Activated B cell treated with CpG ODN at 0.5 μM for 24 hours (primary cell): ENCODE measurements at regions of chr15 and their contacts with region 1.

Region 1: GRCh38 chr15:84588053-84588874 is 12.5 kb upstream of the ZSCAN2 start:
- DNase-seq: peak; percentile 79
- ATAC-seq: peak; percentile 100
- H3K4me3 Mint-ChIP-seq: peak overlapping the region; percentile 72
- H3K27ac Mint-ChIP-seq: no peak overlapping the region
- H3K4me1 Mint-ChIP-seq: peaks cover 4% of the 10 kb centered on the region
- H3K27me3 Mint-ChIP-seq: peaks cover 3% of the 10 kb centered on the region
- CTCF ChIP-seq: peak; percentile 39

Region 2: GRCh38 chr15:84600851-84601838 is 12.9 kb after region 1 on chr15 and contains the start of gene ZSCAN2:
- CTCF ChIA-PET with region 1: interaction called, 9 read pairs
- POLR2A ChIA-PET with region 1: interaction called, 12 read pairs
- intact Hi-C with region 1: no loop called
- DNase-seq: peak; percentile 86
- ATAC-seq: peak; percentile 94
- H3K4me3 Mint-ChIP-seq: peak within 1 kb of the TSS; percentile 97
- H3K27ac Mint-ChIP-seq: peak within 1 kb of the TSS; percentile 88
- H3K4me1 Mint-ChIP-seq: peaks cover 73% of the 10 kb centered on the region
- H3K27me3 Mint-ChIP-seq: no peaks in the 10 kb centered on the region
- CTCF ChIP-seq: no peak
- total RNA-seq, gene ZSCAN2: 16.0 and 18.7 TPM in 2 replicates

Region 3: GRCh38 chr15:84702961-84703482 is 114.8 kb after region 1 on chr15:
- CTCF ChIA-PET with region 1: no interaction called
- POLR2A ChIA-PET with region 1: no interaction called
- intact Hi-C with region 1: no loop called
- DNase-seq: no peak
- ATAC-seq: no peak
- H3K4me3 Mint-ChIP-seq: no peak overlapping the region
- H3K27ac Mint-ChIP-seq: no peak overlapping the region
- H3K4me1 Mint-ChIP-seq: peaks cover 62% of the 10 kb centered on the region
- H3K27me3 Mint-ChIP-seq: no peaks in the 10 kb centered on the region
- CTCF ChIP-seq: no peak

Region 4: DNA sequence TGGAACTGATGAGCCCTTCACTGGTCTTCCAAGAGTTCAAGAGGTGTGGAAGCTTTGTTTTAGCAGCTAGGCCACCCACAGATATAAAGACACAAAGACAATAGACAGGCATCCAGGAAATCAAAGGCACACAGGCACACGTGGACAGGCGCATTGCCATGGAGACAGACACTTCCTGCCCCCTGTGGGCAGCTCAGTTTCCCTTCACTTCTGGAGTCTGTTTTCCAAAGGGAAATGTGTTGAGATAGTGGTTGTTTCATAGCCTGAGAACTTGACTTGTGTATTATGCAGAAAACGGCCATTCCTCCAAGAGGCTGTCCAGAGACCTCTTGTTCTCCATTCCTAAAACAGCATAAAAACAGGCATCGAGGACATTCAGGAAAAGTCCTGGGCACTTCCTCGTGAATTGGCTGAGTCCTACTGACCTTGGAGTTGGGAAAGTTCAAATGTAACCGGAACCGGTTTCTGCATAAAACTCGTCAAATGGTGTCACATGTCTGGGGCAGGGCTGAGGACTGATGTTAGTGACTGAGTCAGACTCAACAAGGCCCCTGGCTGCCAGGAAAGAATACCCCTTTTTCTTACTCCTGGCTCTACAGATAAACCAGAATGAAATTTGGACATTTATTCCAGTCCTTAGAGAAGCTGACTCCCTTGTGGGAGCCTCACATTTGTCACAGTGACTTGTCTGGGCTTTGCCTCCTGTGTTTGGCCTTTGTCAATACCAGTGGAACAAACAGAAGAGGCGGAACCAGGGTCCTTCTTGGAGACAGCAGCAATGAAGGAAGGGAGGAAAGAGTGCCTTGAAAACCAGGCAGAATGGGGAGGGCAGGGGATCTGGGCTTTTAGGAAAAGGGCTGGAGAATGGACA is 230.2 kb after region 1 on chr15:
- CTCF ChIA-PET with region 1: no interaction called
- POLR2A ChIA-PET with region 1: no interaction called
- intact Hi-C with region 1: loop called (anchors 5 kb)
- DNase-seq: no peak
- ATAC-seq: no peak
- H3K4me3 Mint-ChIP-seq: no peak overlapping the region
- H3K27ac Mint-ChIP-seq: no peak overlapping the region
- H3K4me1 Mint-ChIP-seq: peaks cover 2% of the 10 kb centered on the region
- H3K27me3 Mint-ChIP-seq: peaks cover 11% of the 10 kb centered on the region
- CTCF ChIP-seq: no peak

Region 5: DNA sequence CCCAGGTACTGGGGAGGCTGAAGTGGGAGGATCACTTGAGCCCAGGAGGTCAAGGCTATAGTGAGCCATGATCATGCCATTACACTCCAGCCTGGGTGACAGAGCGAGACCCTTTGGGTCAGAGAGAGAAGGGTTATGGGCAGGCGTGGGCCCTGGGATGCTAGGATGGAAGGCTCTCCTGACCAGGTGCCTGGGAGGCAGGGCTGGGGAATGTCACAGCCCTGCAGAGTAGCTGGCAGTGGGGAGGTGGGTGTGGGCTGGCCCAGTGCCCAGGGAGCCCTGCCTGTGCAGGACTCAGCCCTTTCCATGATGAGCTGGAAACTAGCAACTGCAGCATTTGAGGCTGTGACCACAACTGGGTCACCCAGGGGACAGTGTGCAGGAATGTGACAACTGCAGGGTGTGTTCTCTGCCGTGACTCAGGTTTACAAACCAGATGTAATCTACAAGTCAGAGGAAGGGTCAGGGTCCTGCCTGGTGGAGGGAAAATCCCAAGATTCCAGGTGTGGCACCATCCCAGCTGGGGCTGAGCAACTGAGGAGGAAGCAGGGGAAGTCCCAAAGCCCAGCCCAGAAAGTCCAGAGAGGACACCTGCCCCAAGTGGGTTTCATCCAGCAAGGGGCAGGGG is 341.6 kb after region 1 on chr15:
- CTCF ChIA-PET with region 1: interaction called, 30 read pairs
- POLR2A ChIA-PET with region 1: interaction called, 14 read pairs
- intact Hi-C with region 1: loop called (anchors 1 kb)
- DNase-seq: no peak
- ATAC-seq: no peak
- H3K4me3 Mint-ChIP-seq: no peak overlapping the region
- H3K27ac Mint-ChIP-seq: no peak overlapping the region
- H3K4me1 Mint-ChIP-seq: peaks cover 5% of the 10 kb centered on the region
- H3K27me3 Mint-ChIP-seq: no peaks in the 10 kb centered on the region
- CTCF ChIP-seq: no peak

Region 6: GRCh38 chr15:85168642-85169173 is 580.4 kb after region 1 on chr15:
- CTCF ChIA-PET with region 1: no interaction called
- POLR2A ChIA-PET with region 1: no interaction called
- intact Hi-C with region 1: loop called (anchors 5 kb)
- DNase-seq: peak; percentile 15
- ATAC-seq: peak; percentile 45
- H3K4me3 Mint-ChIP-seq: no peak overlapping the region
- H3K27ac Mint-ChIP-seq: no peak overlapping the region
- H3K4me1 Mint-ChIP-seq: no peaks in the 10 kb centered on the region
- H3K27me3 Mint-ChIP-seq: peaks cover 33% of the 10 kb centered on the region
- CTCF ChIP-seq: no peak